CD4-positive, alpha-beta memory T cell (primary cell): ENCODE measurements at regions of chr9 and their contacts with region 1.

Region 1: GRCh38 chr9:122827761-122828093 is 661 bp downstream of the PDCL start:
- DNase-seq: no peak
- H3K4me3 ChIP-seq: peak overlapping the region; percentile 93 to 98
- H3K4me3 Mint-ChIP-seq: peak overlapping the region; percentile 95 to 100 (median 98)
- H3K27ac ChIP-seq: peak overlapping the region; percentile 87
- H3K27ac Mint-ChIP-seq: peak overlapping the region; percentile 96 to 98 (median 97)
- H3K4me1 ChIP-seq: peaks cover 37% of the 10 kb centered on the region
- H3K4me1 Mint-ChIP-seq: peaks cover 26 to 53% (median 34%) of the 10 kb centered on the region in 4 donors
- H3K27me3 ChIP-seq: no peaks in the 10 kb centered on the region
- H3K27me3 Mint-ChIP-seq: no peaks in the 10 kb centered on the region

Region 2: DNA sequence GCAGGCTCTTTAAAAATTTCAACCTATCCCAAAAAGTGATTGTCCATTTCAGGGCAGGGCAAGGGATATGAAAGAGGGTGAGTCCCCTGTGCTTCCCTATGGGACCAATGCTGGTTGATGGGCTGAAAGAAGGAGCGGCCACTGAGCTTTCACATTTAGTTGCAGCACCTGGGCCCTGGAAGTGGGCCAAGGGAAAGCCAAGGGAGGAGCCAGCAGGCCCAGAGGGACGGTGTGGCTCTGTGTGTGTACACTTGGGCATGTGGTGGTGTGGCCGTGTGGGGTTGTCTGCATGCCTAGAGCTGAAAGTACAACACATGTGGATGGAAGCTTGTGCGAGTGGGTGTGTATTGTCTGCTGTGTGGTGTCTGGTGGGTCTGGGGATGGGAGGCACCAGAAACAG is 1971.0 kb before region 1 on chr9:
- CTCF ChIA-PET with region 1: no interaction called
- POLR2A ChIA-PET with region 1: no interaction called
- intact Hi-C with region 1: no loop called
- DNase-seq: no peak
- H3K4me3 ChIP-seq: no peak overlapping the region
- H3K4me3 Mint-ChIP-seq: no peak overlapping the region
- H3K27ac ChIP-seq: no peak overlapping the region
- H3K27ac Mint-ChIP-seq: peak overlapping the region in 4 of 7 donors; percentile 8 to 83 (median 40)
- H3K4me1 ChIP-seq: no peaks in the 10 kb centered on the region
- H3K4me1 Mint-ChIP-seq: peaks cover 0 to 3% (median under 1%) of the 10 kb centered on the region in 4 donors
- H3K27me3 ChIP-seq: no peaks in the 10 kb centered on the region
- H3K27me3 Mint-ChIP-seq: no peaks in the 10 kb centered on the region

Region 3: GRCh38 chr9:122092611-122093506 is 734.9 kb before region 1 on chr9 and contains the start of gene TTLL11:
- CTCF ChIA-PET with region 1: no interaction called
- POLR2A ChIA-PET with region 1: no interaction called
- intact Hi-C with region 1: loop called (anchors 1 kb)
- DNase-seq: peak; percentile 95 to 97 (median 96)
- H3K4me3 ChIP-seq: peak within 1 kb of the TSS; percentile 56 to 62
- H3K4me3 Mint-ChIP-seq: peak within 1 kb of the TSS; percentile 87 to 97 (median 93)
- H3K27ac ChIP-seq: peak within 1 kb of the TSS; percentile 48
- H3K27ac Mint-ChIP-seq: peak within 1 kb of the TSS; percentile 63 to 94 (median 88)
- H3K4me1 ChIP-seq: peaks cover 30% of the 10 kb centered on the region
- H3K4me1 Mint-ChIP-seq: peaks cover 34 to 57% (median 39%) of the 10 kb centered on the region in 4 donors
- H3K27me3 ChIP-seq: no peaks in the 10 kb centered on the region
- H3K27me3 Mint-ChIP-seq: peaks cover 0 to 3% of the 10 kb centered on the region in 2 donors
- total RNA-seq, gene TTLL11: 2.9 to 3.2 TPM

Region 4: GRCh38 chr9:122264360-122265148 is 563.2 kb before region 1 on chr9 and contains the starts of genes MRRF and RBM18:
- CTCF ChIA-PET with region 1: no interaction called
- POLR2A ChIA-PET with region 1: interaction called, 6 read pairs
- intact Hi-C with region 1: loop called (anchors 10 kb)
- DNase-seq: peak; percentile 86 to 91 (median 88)
- H3K4me3 ChIP-seq: peak within 1 kb of the TSS; percentile 93 to 94
- H3K4me3 Mint-ChIP-seq: peak within 1 kb of the TSS; percentile 90 to 99 (median 98)
- H3K27ac ChIP-seq: peak within 1 kb of the TSS; percentile 97
- H3K27ac Mint-ChIP-seq: peak within 1 kb of the TSS; percentile 94 to 100 (median 100)
- H3K4me1 ChIP-seq: peaks cover 50% of the 10 kb centered on the region
- H3K4me1 Mint-ChIP-seq: peaks cover 34 to 68% (median 49%) of the 10 kb centered on the region in 4 donors
- H3K27me3 ChIP-seq: no peaks in the 10 kb centered on the region
- H3K27me3 Mint-ChIP-seq: no peaks in the 10 kb centered on the region
- total RNA-seq, gene MRRF: 26.8 to 27.3 TPM
- total RNA-seq, gene RBM18: 21.3 to 21.4 TPM

Region 5: GRCh38 chr9:122767817-122768216 is 59.9 kb before region 1 on chr9:
- CTCF ChIA-PET with region 1: no interaction called
- POLR2A ChIA-PET with region 1: no interaction called
- intact Hi-C with region 1: no loop called
- DNase-seq: no peak
- H3K4me3 ChIP-seq: no peak overlapping the region
- H3K4me3 Mint-ChIP-seq: no peak overlapping the region
- H3K27ac ChIP-seq: no peak overlapping the region
- H3K27ac Mint-ChIP-seq: no peak overlapping the region
- H3K4me1 ChIP-seq: no peaks in the 10 kb centered on the region
- H3K4me1 Mint-ChIP-seq: no peaks in the 10 kb centered on the region
- H3K27me3 ChIP-seq: no peaks in the 10 kb centered on the region
- H3K27me3 Mint-ChIP-seq: peaks cover 0 to 3% of the 10 kb centered on the region in 2 donors

Region 6: DNA sequence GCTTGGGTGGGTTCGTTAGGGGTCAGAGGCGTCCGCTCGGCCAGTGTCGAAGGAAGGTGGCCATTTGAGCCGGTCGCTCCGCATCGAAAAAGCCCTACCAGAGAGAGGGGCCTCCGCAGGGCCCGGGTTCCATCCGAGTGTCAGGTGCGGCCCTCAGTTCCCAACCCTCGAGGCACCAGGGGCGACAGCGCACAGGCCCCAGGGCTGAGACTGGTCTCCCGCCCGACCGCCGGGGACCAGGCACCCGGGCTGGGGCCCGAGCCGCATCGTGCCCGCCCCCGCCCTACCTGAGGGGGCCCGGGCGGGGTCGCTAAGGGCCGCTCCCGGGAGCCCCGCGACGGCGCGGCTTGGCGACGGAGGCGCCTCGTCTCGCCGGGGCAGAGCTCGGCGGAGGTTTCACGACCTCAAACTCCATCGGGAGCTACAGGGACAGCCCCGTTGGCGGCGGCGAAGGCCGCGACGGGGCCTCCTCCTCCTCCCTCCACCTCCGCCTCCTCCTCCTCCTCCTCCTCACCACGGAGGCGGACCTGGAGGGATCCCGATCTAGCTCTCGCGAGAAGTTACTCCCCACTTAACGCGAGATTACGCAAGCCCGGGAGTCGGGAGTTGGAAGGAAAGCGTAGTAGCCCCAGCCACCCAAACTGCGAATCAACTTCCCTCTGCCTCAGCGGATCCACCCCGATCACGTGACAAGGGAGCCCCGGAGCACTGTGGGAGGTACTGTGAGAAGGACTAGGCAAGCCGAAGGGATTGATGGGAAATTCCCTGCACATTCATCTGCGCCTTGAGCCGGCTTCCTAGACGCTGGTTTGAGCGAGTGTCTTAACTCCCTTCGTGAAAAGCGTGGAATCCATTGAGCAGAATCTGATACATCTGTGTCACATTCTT is 77.3 kb after region 1 on chr9 and contains the start of gene RC3H2:
- CTCF ChIA-PET with region 1: no interaction called
- POLR2A ChIA-PET with region 1: interaction called, 19 read pairs
- intact Hi-C with region 1: loop called (anchors 2 kb)
- DNase-seq: peak; percentile 97 to 99 (median 98)
- H3K4me3 ChIP-seq: peak within 1 kb of the TSS; percentile 91 to 93
- H3K4me3 Mint-ChIP-seq: peak within 1 kb of the TSS; percentile 92 to 99 (median 94)
- H3K27ac ChIP-seq: peak within 1 kb of the TSS; percentile 86
- H3K27ac Mint-ChIP-seq: peak within 1 kb of the TSS; percentile 97 to 99 (median 97)
- H3K4me1 ChIP-seq: peaks cover 38% of the 10 kb centered on the region
- H3K4me1 Mint-ChIP-seq: peaks cover 15 to 40% (median 24%) of the 10 kb centered on the region in 4 donors
- H3K27me3 ChIP-seq: no peaks in the 10 kb centered on the region
- H3K27me3 Mint-ChIP-seq: no peaks in the 10 kb centered on the region
- total RNA-seq, gene RC3H2: 66.6 to 70.7 TPM

Region 7: GRCh38 chr9:123268240-123268949 is 440.7 kb after region 1 on chr9 and contains the start of gene STRBP:
- CTCF ChIA-PET with region 1: no interaction called
- POLR2A ChIA-PET with region 1: no interaction called
- intact Hi-C with region 1: loop called (anchors 1 kb)
- DNase-seq: peak; percentile 89 to 98 (median 95)
- H3K4me3 ChIP-seq: peak within 1 kb of the TSS; percentile 68 to 76
- H3K4me3 Mint-ChIP-seq: peak within 1 kb of the TSS; percentile 82 to 93 (median 90)
- H3K27ac ChIP-seq: peak within 1 kb of the TSS; percentile 63
- H3K27ac Mint-ChIP-seq: peak within 1 kb of the TSS; percentile 77 to 94 (median 89)
- H3K4me1 ChIP-seq: peaks cover 22% of the 10 kb centered on the region
- H3K4me1 Mint-ChIP-seq: peaks cover 19 to 33% (median 25%) of the 10 kb centered on the region in 4 donors
- H3K27me3 ChIP-seq: no peaks in the 10 kb centered on the region
- H3K27me3 Mint-ChIP-seq: no peaks in the 10 kb centered on the region
- total RNA-seq, gene STRBP: 21.1 to 23.8 TPM